MCF 10A (cell line): ENCODE measurements at regions of chr1 and their contacts with region 1.

Region 1: DNA sequence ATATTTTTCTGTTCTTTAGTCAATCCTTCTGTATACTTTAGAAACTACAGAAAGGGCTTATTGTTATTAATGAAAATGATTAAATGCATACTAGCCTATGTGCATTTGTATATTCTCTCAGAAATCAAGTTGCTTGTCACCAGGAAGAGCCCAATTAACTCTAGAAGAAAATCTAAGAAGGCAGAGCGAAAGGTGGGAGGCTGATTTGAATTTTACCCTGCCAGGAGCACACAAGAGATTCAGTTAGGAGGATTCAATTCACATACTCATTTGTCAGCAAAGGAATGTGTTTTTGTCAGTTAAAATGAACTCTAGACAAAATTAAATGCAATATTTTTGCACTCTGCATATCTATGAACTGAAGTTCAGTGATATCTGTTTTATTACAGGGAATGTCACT is 411.8 kb downstream of the KCNT2 start:
- DNase-seq: no peak
- H3K4me3 Mint-ChIP-seq: no peak overlapping the region
- H3K27ac Mint-ChIP-seq: no peak overlapping the region
- H3K4me1 Mint-ChIP-seq: peaks cover 11% of the 10 kb centered on the region
- H3K27me3 Mint-ChIP-seq: no peaks in the 10 kb centered on the region
- CTCF ChIP-seq: no peak

Region 2: DNA sequence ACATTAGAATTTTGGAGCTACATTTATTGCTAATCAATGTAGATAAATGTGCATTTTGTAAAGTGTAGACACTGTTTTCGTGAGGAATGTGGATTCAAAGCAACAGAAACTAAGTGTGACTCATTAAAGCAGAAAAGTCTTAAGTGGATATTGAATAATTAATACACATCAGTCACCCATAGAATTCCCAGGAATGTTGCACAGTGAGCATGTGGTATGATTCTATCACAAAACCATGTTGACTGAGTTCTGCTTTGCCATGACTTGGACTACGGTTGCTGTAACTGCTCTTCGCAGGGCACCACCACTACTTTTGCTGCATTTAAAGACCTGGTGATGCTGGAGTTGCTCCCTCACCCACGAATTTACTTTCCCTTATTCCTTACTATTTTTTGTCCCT is 60.1 kb before region 1 on chr1:
- CTCF ChIA-PET with region 1: no interaction called
- POLR2A ChIA-PET with region 1: no interaction called
- intact Hi-C with region 1: no loop called
- DNase-seq: no peak
- H3K4me3 Mint-ChIP-seq: no peak overlapping the region
- H3K27ac Mint-ChIP-seq: no peak overlapping the region
- H3K4me1 Mint-ChIP-seq: no peaks in the 10 kb centered on the region
- H3K27me3 Mint-ChIP-seq: no peaks in the 10 kb centered on the region
- CTCF ChIP-seq: no peak

Region 3: GRCh38 chr1:196209983-196210382 is 13.5 kb after region 1 on chr1:
- CTCF ChIA-PET with region 1: interaction called, 10 read pairs
- POLR2A ChIA-PET with region 1: no interaction called
- intact Hi-C with region 1: no loop called
- DNase-seq: no peak
- H3K4me3 Mint-ChIP-seq: no peak overlapping the region
- H3K27ac Mint-ChIP-seq: no peak overlapping the region
- H3K4me1 Mint-ChIP-seq: no peaks in the 10 kb centered on the region
- H3K27me3 Mint-ChIP-seq: no peaks in the 10 kb centered on the region
- CTCF ChIP-seq: no peak

Region 4: GRCh38 chr1:196438329-196438728 is 241.8 kb after region 1 on chr1:
- CTCF ChIA-PET with region 1: no interaction called
- POLR2A ChIA-PET with region 1: no interaction called
- intact Hi-C with region 1: no loop called
- DNase-seq: no peak
- H3K4me3 Mint-ChIP-seq: no peak overlapping the region
- H3K27ac Mint-ChIP-seq: no peak overlapping the region
- H3K4me1 Mint-ChIP-seq: no peaks in the 10 kb centered on the region
- H3K27me3 Mint-ChIP-seq: no peaks in the 10 kb centered on the region
- CTCF ChIP-seq: no peak